GM10248 (cell line): ENCODE measurements at regions of chr21 and their contacts with region 1.

Region 1: DNA sequence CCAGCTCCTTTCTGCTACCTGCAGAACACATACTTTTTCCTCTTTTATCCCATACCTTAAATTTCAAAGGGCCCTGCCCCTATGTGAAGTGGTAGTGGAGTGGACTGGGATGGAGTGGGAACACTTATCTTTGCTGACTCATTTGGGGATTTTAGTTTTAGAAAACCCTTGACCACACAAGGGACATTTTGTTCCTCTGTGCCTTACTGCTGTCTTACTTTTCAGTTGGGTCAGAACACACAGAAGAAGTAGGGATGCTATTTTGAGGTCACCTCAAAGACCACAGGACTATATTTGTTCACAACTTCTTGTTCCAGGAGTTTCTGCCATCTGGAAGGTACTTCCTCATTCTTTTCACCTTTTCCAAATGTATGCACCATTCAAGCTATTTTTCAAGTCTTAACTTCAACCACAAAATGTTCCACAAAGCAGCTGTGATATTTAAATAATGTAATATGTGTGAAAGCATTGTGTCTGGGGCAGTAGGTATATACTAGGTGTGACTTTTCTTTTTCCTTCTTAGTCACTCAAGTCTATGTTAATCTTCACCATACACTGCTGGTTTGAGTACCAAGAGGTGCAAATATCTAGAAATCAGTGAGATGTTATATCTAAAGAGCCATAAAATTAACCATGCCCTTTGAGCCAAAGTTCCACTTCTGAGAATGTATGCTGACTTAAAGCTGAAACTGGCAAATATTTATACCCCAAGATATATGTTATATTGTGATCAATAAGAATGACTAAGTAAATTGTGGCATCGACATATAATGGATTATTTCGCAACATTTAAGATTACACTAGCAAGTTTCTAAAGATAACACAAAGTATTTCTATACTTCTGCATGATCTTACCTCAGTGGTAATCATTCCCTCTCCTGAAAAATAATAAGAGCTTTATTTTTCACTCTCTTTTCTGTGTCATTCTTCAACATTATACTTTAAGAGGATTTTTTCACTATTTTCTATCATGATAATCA is 308.5 kb downstream of the MRPL39 start:
- DNase-seq: peak; percentile 8
- CTCF ChIP-seq: no peak

Region 2: DNA sequence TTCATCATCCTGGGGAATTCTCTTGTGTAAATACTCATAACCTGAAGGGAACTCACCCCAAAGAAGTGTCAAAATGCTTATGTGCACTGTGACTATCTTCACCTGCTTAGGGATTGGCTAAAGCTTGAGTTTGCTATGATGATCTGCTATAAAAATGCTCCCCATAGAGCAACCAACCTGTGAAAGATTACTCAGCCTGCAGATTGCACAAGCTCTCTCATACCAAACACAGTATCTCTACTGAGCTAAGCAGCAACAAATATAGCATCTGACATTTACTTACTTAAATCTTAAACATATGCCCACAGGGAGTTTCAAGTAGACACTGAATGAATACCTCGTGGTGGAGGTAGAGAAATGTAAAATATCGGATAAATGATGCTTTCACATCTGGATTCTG is 417.3 kb before region 1 on chr21:
- CTCF ChIA-PET with region 1: no interaction called
- POLR2A ChIA-PET with region 1: no interaction called
- DNase-seq: no peak
- CTCF ChIP-seq: no peak

Region 3: DNA sequence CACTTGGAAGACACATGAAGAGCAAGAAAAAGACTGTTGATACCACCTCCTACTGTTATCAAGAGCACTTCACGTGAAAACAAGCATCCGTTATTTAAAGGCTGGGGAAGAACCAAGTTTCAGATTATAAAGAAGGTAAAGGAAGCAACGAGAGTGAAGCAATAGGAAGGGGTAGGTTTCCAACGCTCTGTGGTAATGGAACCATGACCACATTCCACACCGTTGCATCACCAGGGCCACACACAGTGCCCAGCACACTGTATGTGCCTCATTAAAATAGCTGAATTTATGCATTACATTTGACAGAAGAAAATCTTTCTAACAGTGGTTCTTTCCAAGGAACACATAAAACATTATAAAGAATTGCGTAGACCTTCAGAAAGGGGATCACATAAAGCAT is 127.4 kb before region 1 on chr21:
- CTCF ChIA-PET with region 1: no interaction called
- POLR2A ChIA-PET with region 1: no interaction called
- DNase-seq: no peak
- CTCF ChIP-seq: no peak

Region 4: DNA sequence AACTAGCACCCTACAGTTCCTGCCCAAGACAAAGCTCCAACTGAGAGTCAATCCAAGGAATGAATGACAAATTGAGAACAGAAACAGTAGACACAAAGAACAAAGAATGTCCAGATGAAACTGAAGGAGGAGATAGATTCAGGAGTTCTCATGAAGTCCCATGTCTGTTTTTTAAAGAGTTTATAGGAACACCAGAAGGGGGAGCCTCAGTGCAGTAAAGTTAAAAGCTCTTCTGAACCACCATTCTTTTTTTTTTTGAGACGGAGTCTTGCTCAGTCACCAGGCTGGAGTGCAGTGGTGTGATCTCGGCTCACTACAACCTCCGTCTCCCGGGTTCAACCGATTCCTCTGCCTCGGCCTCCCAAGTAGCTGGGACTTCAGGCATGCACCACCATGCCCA is 15.1 kb before region 1 on chr21:
- CTCF ChIA-PET with region 1: interaction called, 40 read pairs
- POLR2A ChIA-PET with region 1: no interaction called
- DNase-seq: peak; percentile 25
- CTCF ChIP-seq: peak; percentile 32

Region 5: GRCh38 chr21:25313829-25314228 is 15.0 kb after region 1 on chr21:
- CTCF ChIA-PET with region 1: interaction called, 23 read pairs
- POLR2A ChIA-PET with region 1: no interaction called
- DNase-seq: no peak
- CTCF ChIP-seq: peak; percentile 39